Naive thymus-derived CD4-positive, alpha-beta T cell (primary cell): ENCODE measurements at regions of chr10 and their contacts with region 1.

Region 1: GRCh38 chr10:97400665-97401454 is at the start of gene RRP12:
- DNase-seq: peak; percentile 47 to 96 (median 92)
- ATAC-seq: peak; percentile 96
- H3K4me3 ChIP-seq: peak within 1 kb of the TSS; percentile 73
- H3K4me3 Mint-ChIP-seq: peak within 1 kb of the TSS; percentile 90 to 97 (median 95)
- H3K27ac ChIP-seq: peak within 1 kb of the TSS; percentile 90
- H3K27ac Mint-ChIP-seq: peak within 1 kb of the TSS; percentile 81 to 99 (median 98)
- H3K4me1 ChIP-seq: peaks cover 13 to 15% of the 10 kb centered on the region in 2 donors
- H3K4me1 Mint-ChIP-seq: peaks cover 6 to 22% (median 17%) of the 10 kb centered on the region in 7 donors
- H3K27me3 ChIP-seq: no peaks in the 10 kb centered on the region
- H3K27me3 Mint-ChIP-seq: no peaks in the 10 kb centered on the region
- total RNA-seq, gene RRP12: 22.0 to 197 (median 32.3) TPM

Region 2: DNA sequence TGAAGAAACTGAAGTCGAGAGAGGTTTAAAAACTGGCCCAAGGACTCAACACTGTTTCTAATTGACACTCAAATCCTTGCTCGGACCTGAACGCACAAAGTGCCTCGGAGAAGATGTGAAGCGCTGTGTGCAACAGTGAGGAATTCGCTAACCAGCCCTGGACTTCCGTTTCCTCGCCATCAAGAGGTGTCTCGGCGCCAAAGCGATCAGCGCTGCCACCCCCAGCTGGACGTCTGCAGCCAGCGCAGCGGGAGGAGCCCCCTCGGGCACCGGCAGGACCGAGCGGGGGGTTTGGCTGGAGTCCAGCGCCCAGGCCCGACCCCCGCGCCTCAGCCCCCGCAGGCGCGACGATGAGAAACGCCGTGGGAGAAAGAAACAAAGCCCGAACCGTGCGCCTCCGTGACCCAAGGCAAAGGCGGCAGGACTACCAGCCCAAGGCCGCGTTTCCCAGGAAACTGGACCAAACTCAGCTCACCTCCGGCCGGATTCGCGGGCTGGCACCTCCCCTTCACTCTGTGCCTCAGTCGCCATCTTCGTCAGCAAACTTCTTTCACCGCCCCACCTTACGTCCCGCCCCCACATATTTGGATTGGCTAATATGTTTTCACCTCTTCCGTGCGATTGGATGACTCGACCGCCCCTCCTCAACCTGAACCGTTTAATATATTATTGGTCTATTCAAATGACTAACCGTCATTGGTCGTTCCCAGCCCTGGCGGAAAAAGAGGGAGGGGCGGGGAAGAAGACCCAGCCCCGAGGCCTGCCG is 108.6 kb before region 1 on chr10 and contains the start of gene ARHGAP19:
- CTCF ChIA-PET with region 1: interaction called, 3 read pairs
- POLR2A ChIA-PET with region 1: no interaction called
- intact Hi-C with region 1: loop called (anchors 1 kb)
- DNase-seq: peak; percentile 65 to 97 (median 95)
- ATAC-seq: peak; percentile 100
- H3K4me3 ChIP-seq: peak within 1 kb of the TSS; percentile 88
- H3K4me3 Mint-ChIP-seq: peak within 1 kb of the TSS; percentile 83 to 97 (median 95)
- H3K27ac ChIP-seq: peak within 1 kb of the TSS; percentile 83
- H3K27ac Mint-ChIP-seq: peak within 1 kb of the TSS; percentile 32 to 98 (median 92)
- H3K4me1 ChIP-seq: peaks cover 4 to 8% of the 10 kb centered on the region in 2 donors
- H3K4me1 Mint-ChIP-seq: peaks cover 17 to 26% (median 24%) of the 10 kb centered on the region in 7 donors
- H3K27me3 ChIP-seq: no peaks in the 10 kb centered on the region
- H3K27me3 Mint-ChIP-seq: peaks cover 0 to 4% (median 0%) of the 10 kb centered on the region in 5 donors
- total RNA-seq, gene ARHGAP19: 12.8 to 40.1 (median 16.1) TPM

Region 3: DNA sequence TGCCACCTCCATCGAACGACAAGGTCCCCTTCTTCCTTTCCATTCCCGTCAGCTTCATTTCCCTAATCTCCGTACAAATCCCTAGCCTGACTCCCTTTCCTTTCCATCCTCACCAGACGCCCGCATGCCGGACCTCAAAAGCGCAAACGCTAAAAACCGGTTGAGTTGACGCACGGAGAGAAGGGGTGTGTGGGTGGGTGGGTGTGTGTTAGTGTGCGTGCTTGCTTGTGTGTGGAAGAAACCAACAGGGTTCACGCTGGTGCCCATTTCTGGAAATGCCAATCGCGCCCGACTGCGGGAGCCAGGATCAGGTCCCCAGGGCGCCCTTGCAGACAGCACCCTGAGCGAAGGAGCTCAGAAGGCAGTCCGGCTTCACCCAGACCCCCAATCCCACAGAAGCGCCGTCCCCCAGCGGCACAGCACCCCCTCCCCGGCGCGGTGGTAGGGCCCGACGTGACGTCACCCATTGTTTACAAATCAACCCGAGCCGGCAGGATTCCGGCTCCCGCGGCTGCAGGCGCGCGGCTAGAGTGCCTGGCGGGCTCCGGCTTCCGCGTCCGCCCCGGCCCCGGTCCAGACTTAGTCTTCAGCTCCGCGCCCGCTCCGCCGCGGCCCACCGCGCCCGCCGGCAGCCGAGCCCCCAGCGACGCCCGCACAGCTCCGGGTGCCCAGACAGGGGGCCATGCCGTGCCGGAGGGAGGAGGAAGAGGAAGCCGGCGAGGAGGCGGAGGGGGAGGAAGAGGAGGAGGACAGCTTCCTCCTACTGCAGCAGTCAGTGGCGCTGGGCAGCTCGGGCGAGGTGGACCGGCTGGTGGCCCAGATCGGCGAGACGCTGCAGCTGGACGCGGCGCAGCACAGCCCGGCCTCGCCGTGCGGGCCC is 81.8 kb before region 1 on chr10 and contains the start of gene FRAT1:
- CTCF ChIA-PET with region 1: no interaction called
- POLR2A ChIA-PET with region 1: interaction called, 6 read pairs
- intact Hi-C with region 1: loop called (anchors 1 kb)
- DNase-seq: peak; percentile 87 to 99 (median 95)
- ATAC-seq: peak; percentile 87
- H3K4me3 ChIP-seq: peak within 1 kb of the TSS; percentile 92
- H3K4me3 Mint-ChIP-seq: peak within 1 kb of the TSS; percentile 92 to 99 (median 94)
- H3K27ac ChIP-seq: peak within 1 kb of the TSS; percentile 100
- H3K27ac Mint-ChIP-seq: peak within 1 kb of the TSS; percentile 99 to 100 (median 99)
- H3K4me1 ChIP-seq: peaks cover 12 to 18% of the 10 kb centered on the region in 2 donors
- H3K4me1 Mint-ChIP-seq: peaks cover 20 to 40% (median 29%) of the 10 kb centered on the region in 7 donors
- H3K27me3 ChIP-seq: no peaks in the 10 kb centered on the region
- H3K27me3 Mint-ChIP-seq: peaks cover 0 to 20% (median 0%) of the 10 kb centered on the region in 5 donors
- total RNA-seq, gene FRAT1: 5.3 to 41.0 (median 21.8) TPM

Region 4: GRCh38 chr10:97334370-97335175 is 66.3 kb before region 1 on chr10 and contains the start of gene FRAT2:
- CTCF ChIA-PET with region 1: interaction called, 3 read pairs
- POLR2A ChIA-PET with region 1: interaction called, 5 read pairs
- intact Hi-C with region 1: loop called (anchors 1 kb)
- DNase-seq: peak; percentile 85 to 96 (median 92)
- ATAC-seq: peak; percentile 94
- H3K4me3 ChIP-seq: peak within 1 kb of the TSS; percentile 78
- H3K4me3 Mint-ChIP-seq: peak within 1 kb of the TSS; percentile 88 to 98 (median 94)
- H3K27ac ChIP-seq: peak within 1 kb of the TSS; percentile 97
- H3K27ac Mint-ChIP-seq: peak within 1 kb of the TSS; percentile 89 to 97 (median 93)
- H3K4me1 ChIP-seq: peaks cover 20 to 24% of the 10 kb centered on the region in 2 donors
- H3K4me1 Mint-ChIP-seq: peaks cover 28 to 48% (median 42%) of the 10 kb centered on the region in 7 donors
- H3K27me3 ChIP-seq: no peaks in the 10 kb centered on the region
- H3K27me3 Mint-ChIP-seq: peaks cover 0 to 36% (median 0%) of the 10 kb centered on the region in 5 donors
- total RNA-seq, gene FRAT2: 9.3 to 39.7 (median 29.8) TPM

Region 5: DNA sequence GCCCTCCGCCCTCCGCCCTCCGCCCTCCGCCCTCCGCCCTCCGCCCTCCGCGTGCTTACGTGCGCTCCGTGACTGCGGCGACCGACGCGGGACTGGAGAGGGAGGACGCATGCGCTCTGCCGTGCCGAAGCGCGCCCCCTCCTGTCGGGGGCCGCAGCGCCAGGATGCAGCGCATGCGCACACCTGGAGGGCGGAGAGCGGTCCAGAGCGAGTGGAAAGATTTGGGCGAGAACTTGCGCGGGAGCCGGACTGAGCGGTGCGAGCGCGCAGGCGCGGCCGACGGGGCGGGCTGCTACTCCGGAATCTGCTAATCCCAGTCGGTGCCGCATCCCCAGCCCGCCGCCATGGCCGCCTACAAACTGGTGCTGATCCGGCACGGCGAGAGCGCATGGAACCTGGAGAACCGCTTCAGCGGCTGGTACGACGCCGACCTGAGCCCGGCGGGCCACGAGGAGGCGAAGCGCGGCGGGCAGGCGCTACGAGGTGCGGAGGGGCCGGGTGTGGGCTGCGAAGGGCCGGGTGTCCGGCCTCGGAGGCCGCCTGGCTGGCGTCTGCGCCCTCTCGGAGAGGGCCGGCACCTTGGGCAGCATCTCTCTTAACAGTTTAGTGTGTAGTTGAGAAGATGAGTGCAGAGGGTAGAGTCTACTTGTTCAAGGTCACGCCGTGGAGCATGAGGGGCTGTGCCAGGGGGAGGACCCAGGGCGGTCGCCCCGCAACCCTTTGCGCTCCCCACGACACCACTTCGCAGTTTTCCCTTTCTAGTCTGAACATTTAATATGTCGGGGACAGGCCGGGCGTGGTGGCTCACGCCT is 25.3 kb after region 1 on chr10 and contains the start of gene PGAM1:
- CTCF ChIA-PET with region 1: interaction called, 6 read pairs
- POLR2A ChIA-PET with region 1: interaction called, 3 read pairs
- intact Hi-C with region 1: loop called (anchors 1 kb)
- DNase-seq: peak; percentile 93 to 98 (median 97)
- ATAC-seq: peak; percentile 91
- H3K4me3 ChIP-seq: peak within 1 kb of the TSS; percentile 92
- H3K4me3 Mint-ChIP-seq: peak within 1 kb of the TSS; percentile 83 to 97 (median 95)
- H3K27ac ChIP-seq: peak within 1 kb of the TSS; percentile 87
- H3K27ac Mint-ChIP-seq: peak within 1 kb of the TSS; percentile 77 to 99 (median 95)
- H3K4me1 ChIP-seq: peaks cover 20 to 29% of the 10 kb centered on the region in 2 donors
- H3K4me1 Mint-ChIP-seq: peaks cover 10 to 53% (median 34%) of the 10 kb centered on the region in 7 donors
- H3K27me3 ChIP-seq: no peaks in the 10 kb centered on the region
- H3K27me3 Mint-ChIP-seq: peaks cover 0 to 2% (median 0%) of the 10 kb centered on the region in 5 donors
- total RNA-seq, gene PGAM1: 58.5 to 536 (median 69.8) TPM

Region 6: DNA sequence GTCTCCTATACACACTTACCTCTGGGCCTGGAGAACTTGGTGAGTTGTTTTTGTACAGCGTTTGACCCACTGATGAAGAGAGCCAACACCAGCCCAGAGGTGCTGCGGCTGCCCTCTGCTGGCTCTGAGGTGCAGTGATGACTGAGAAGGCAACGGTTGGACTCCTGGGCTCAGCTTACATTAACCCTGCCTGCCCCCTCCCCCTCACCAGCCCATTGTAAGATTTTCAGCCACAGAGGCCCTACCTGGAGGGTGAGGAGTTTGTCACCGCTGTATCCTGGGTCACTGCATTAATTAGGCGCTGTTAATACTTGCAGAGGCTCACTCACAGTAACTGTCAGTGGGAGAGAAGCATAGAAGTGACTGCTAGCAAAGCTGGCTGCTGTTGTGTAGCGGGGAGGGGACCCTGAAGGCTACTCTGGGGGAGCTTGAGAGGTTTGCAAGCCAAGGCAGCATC is 152.7 kb after region 1 on chr10:
- CTCF ChIA-PET with region 1: interaction called, 3 read pairs
- POLR2A ChIA-PET with region 1: no interaction called
- intact Hi-C with region 1: loop called in 1 of 2 experiments (anchors 1 kb)
- DNase-seq: peak in 7 of 9 donors; percentile 27 to 60 (median 52)
- ATAC-seq: peak; percentile 64
- H3K4me3 ChIP-seq: no peak overlapping the region
- H3K4me3 Mint-ChIP-seq: no peak overlapping the region
- H3K27ac ChIP-seq: no peak overlapping the region
- H3K27ac Mint-ChIP-seq: no peak overlapping the region
- H3K4me1 ChIP-seq: no peaks in the 10 kb centered on the region
- H3K4me1 Mint-ChIP-seq: peaks cover 0 to 2% (median 0%) of the 10 kb centered on the region in 7 donors
- H3K27me3 ChIP-seq: no peaks in the 10 kb centered on the region
- H3K27me3 Mint-ChIP-seq: no peaks in the 10 kb centered on the region

Region 7: DNA sequence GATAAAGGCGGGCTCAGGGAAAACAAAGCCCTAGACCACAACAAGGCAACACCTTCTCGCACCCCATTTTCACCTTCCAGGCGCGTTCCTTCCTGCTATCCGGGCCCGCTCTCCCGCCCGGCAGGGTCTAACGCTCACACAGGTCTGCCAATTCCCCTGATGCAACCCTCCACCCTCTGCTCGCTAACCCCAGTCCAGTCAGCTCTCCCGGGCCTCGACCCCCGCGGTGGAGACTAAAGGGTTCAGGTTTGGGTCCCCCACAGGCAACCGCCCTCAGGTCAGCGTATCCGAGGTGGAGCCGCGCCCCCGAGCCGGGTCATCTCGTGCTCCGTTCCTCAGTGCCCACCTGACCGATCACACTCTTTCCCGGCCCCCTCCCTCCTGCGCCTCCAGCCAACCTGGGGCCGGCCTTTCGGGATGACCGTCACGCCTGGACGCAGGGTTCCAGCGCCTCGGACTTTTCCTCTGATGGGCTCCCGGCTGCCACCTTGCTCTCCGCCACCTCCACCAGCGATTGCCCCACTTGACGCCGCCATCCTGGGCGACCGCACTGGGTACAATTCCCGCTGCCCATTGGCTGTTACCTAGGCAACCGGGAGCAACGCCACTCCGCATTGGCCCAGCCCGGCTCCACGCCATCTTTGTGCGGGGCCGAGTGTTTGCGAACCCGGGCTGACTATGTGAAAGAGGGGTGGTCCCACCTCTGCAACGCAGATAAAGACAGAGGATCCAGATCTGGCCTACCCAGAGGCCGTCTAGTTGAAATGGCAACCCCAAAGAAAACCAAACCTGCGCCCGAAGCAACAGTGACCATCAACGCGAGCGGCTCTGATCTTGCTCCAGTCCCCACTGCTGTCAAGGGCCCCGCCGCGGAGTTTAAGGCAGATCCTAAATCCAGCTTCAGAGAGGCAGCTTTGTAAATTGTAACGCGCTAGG is 232.4 kb after region 1 on chr10 and contains the start of gene MORN4:
- CTCF ChIA-PET with region 1: no interaction called
- POLR2A ChIA-PET with region 1: no interaction called
- intact Hi-C with region 1: loop called in 1 of 2 experiments (anchors 1 kb)
- DNase-seq: peak; percentile 82 to 94 (median 92)
- ATAC-seq: peak; percentile 100
- H3K4me3 ChIP-seq: peak within 1 kb of the TSS; percentile 91
- H3K4me3 Mint-ChIP-seq: peak within 1 kb of the TSS; percentile 92 to 100 (median 98)
- H3K27ac ChIP-seq: peak within 1 kb of the TSS; percentile 50
- H3K27ac Mint-ChIP-seq: peak within 1 kb of the TSS; percentile 82 to 96 (median 92)
- H3K4me1 ChIP-seq: peaks cover 0 to 10% of the 10 kb centered on the region in 2 donors
- H3K4me1 Mint-ChIP-seq: peaks cover 10 to 18% (median 16%) of the 10 kb centered on the region in 7 donors
- H3K27me3 ChIP-seq: no peaks in the 10 kb centered on the region
- H3K27me3 Mint-ChIP-seq: no peaks in the 10 kb centered on the region
- total RNA-seq, gene MORN4: 0.78 to 4.1 (median 1.5) TPM